ENCODE measurements at regions of chr10 and their contacts with region 1.

Region 1: DNA sequence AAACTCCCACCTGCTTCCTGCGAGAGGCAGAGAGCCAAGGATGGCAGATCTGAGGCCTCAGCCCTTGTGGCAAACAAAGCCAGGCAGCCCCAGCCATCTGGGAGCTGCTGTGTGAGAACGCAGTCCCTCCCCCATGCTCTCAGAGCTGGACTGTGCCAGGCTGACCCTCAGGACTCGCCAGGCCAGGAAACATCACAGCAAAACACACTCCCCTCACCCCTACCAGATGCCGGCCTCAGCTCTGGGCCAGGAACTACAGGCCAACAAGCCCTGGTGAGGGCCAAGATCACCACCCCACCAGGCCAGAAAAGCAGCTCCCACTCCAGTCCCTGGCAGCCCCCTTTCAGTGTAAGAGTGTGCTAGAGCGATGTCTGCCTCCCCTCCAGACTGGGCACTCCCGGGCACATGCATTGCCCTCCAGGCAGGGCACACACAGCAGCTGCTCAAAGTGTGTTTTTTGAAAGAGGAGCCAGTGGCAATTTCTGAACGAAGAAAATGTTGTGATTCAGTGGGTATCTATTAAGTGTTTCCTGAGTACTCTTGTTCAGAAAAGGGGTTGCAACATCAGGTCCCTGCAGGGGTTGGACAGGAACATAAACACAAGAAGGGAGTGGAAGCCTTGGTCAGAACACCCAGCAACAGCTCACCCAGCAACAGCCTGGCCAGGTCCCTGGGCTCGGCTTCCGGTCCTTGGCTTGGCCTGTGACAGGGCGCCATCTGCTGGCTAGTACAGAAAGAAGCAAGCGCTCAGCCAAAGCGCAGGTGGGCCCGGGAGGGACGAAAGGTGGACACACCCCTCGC is 18.3 kb downstream of the LRRC20 start:
- DNase-seq: peak; percentile 67
- ATAC-seq: peak; percentile 99
- H3K4me3 ChIP-seq: no peak overlapping the region
- H3K27ac ChIP-seq: no peak overlapping the region; the same call in 1 of the 2 replicates
- H3K4me1 ChIP-seq: peaks cover 2 to 10% of the 10 kb centered on the region in 2 experiments; a peak in 3 of 4 replicates
- H3K27me3 ChIP-seq: no peaks in the 10 kb centered on the region
- CTCF ChIP-seq: peak; percentile 85 to 94 (median 91)
- POLR2A ChIP-seq: no peak
- RAD21 ChIP-seq: peak; percentile 99

Region 2: DNA sequence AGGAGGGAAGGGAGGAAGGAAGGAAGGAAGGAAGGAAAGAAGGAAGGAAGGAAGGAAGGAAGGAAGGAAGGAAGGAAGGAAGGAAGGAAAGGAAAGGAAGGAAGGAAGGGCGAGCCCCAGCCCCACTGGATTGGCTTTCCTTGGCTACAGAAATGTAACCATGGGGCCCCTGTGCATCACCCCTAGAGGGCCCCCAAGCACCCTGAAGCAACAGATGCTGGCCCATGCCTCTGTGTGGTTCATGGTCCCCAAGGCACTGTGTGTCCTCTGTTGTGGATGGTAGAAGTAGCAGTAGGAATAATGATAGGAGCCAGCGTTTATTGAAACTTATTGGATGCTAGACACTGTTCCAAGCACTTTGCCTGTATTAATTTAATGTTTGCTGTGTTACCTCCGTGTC is 428.1 kb before region 1 on chr10:
- CTCF ChIA-PET with region 1: no interaction called
- POLR2A ChIA-PET with region 1: no interaction called
- RAD21 ChIA-PET with region 1: no interaction called
- intact Hi-C with region 1: no loop called
- DNase-seq: no peak
- ATAC-seq: peak; percentile 84
- H3K4me3 ChIP-seq: no peak overlapping the region
- H3K27ac ChIP-seq: no peak overlapping the region
- H3K4me1 ChIP-seq: no peaks in the 10 kb centered on the region
- H3K27me3 ChIP-seq: no peaks in the 10 kb centered on the region
- CTCF ChIP-seq: peak; percentile 21 to 42 (median 26); a peak in 3 of 6 replicates
- POLR2A ChIP-seq: no peak
- RAD21 ChIP-seq: peak; percentile 40; the same call in 1 of the 2 replicates

Region 3: DNA sequence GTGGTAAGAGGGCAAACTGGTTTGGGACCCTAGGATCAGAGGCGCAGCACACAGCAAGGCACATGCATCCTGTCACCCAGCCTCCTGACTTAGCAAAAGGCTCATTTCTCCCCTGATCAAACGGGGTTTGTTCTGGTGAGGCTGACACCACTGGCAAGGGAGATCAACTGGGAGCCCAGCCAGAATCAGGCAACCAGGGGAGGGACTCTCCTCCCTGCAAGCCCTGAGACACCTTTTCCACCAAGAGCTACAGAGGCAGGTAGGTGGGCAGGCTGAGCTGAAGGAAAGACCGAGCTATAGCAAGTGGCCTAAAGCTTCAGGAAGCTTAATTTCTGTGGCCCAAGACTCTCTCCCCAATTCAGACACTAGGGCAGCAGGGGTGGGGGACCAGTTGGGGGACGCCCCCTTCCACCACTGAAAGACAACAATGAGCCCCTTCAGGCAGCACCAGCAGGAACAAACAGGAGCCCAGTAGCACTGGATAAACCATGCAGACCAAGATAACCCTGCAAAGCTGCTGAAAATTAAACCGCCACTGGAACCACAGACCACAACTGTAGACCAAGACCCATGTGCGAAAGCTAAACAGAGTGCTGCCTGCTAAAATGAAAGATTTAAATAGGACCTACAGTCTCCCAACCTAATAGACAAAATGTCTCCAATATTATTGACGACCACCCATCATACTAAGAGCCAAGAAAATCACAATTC is 166.8 kb before region 1 on chr10:
- CTCF ChIA-PET with region 1: no interaction called
- POLR2A ChIA-PET with region 1: no interaction called
- RAD21 ChIA-PET with region 1: no interaction called
- intact Hi-C with region 1: no loop called
- DNase-seq: no peak
- ATAC-seq: 0 out of 2 replicates have a peak, but pooled peaks have one; percentile 26
- H3K4me3 ChIP-seq: no peak overlapping the region
- H3K27ac ChIP-seq: no peak overlapping the region
- H3K4me1 ChIP-seq: no peaks in the 10 kb centered on the region
- H3K27me3 ChIP-seq: no peaks in the 10 kb centered on the region
- CTCF ChIP-seq: no peak
- POLR2A ChIP-seq: no peak
- RAD21 ChIP-seq: no peak

Region 4: DNA sequence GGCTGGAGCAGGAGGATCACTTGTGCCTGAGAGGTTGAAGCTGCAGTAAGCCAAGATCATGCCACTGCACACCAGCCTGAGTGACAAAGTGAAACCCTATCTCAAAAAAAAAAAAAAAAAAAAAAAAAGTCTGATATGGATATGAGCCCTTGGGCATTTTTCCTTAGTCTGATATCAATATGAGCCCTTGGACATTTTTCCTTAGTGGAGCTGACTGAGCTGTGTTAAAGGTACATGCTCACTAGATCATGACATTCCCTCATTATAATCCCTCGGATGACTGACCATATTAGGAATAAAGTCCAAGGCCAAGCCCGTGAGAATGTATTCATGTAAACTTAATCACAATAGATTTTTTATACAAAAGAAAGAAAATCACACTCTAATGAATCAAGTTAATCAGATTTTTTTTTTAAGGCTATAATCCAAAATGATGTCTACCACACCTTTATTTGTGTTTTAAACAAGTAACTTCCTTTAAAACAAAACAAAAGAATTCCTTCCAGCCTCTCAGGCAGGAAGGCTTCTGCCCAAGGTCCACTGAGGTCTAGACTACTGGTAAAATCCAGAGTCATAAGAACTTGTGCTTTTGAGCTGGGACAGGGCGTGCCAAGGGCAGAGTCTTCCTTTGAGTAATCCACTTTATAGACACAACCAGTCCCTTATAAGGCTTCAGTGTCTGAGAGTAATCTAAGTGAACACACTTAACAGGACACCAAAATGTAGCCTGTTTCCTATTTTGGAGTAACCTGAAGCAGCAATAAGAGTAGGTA is 136.4 kb before region 1 on chr10:
- CTCF ChIA-PET with region 1: interaction called, 174 read pairs
- POLR2A ChIA-PET with region 1: interaction called, 3 read pairs
- RAD21 ChIA-PET with region 1: interaction called in 1 of 2 experiments, 30 read pairs
- intact Hi-C with region 1: no loop called
- DNase-seq: no peak
- ATAC-seq: no peak
- H3K4me3 ChIP-seq: no peak overlapping the region
- H3K27ac ChIP-seq: no peak overlapping the region
- H3K4me1 ChIP-seq: peaks cover 12 to 34% of the 10 kb centered on the region in 2 experiments; a peak in 3 of 4 replicates
- H3K27me3 ChIP-seq: no peaks in the 10 kb centered on the region
- CTCF ChIP-seq: no peak
- POLR2A ChIP-seq: no peak
- RAD21 ChIP-seq: no peak

Region 5: DNA sequence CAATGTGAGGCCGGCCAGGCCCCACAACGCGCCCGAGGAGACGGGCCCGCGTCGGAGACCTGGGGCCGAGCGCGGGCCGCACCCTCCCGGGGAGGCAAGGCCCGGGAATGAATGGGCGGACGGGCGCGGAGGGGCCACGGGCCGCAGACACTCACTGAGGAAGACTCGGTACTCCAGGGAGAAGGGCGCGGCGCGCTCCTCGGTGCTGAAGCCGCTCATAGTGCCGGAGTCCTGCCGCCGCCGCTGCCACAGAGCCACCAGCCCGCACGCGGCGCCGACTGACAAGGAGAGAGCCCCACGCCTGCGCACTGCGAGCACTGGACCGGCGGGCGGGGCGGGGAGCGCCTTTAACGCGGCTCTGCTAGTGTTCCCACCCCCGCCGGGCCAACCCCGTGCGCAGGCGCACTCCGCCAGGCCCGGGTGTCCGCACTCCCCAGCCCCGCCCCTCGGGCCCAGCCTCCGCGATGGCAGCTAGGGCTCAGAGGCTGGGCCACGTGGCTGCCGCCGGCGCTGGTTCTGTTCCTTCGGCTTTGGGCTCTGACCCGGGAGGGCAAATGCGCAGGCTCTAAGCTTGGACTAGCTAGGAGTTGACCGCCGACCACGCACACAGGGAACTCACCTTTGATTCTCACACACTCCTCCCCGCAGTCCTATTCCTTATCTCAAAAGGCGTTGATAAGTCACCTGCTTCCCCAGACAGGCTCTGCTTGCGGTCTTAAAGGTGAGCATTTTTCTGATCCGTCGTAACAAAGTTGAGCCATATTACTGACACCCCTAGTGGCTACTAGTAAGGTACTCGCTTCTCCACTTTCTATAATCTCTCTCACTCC is 130.8 kb before region 1 on chr10 and contains the start of gene PPA1:
- CTCF ChIA-PET with region 1: interaction called, 16 read pairs
- POLR2A ChIA-PET with region 1: no interaction called
- RAD21 ChIA-PET with region 1: no interaction called
- intact Hi-C with region 1: no loop called
- DNase-seq: peak; percentile 90
- ATAC-seq: peak; percentile 92
- H3K4me3 ChIP-seq: peak within 1 kb of the TSS; percentile 89 to 95
- H3K27ac ChIP-seq: peak within 1 kb of the TSS; percentile 80
- H3K4me1 ChIP-seq: peaks cover 0 to 19% of the 10 kb centered on the region in 2 experiments; a peak in 3 of 4 replicates
- H3K27me3 ChIP-seq: no peaks in the 10 kb centered on the region
- CTCF ChIP-seq: peak in 1 of 3 experiments; percentile 39; a peak in 3 of 6 replicates
- POLR2A ChIP-seq: peak; percentile 87
- RAD21 ChIP-seq: no peak
- total RNA-seq, gene PPA1: 234 TPM

Region 6: GRCh38 chr10:70267161-70267933 is 96.8 kb before region 1 on chr10:
- CTCF ChIA-PET with region 1: interaction called, 27 read pairs
- POLR2A ChIA-PET with region 1: interaction called, 4 read pairs
- RAD21 ChIA-PET with region 1: interaction called, 15 to 17 read pairs
- intact Hi-C with region 1: loop called (anchors 2 kb)
- DNase-seq: peak; percentile 73
- ATAC-seq: peak; percentile 80
- H3K4me3 ChIP-seq: no peak overlapping the region
- H3K27ac ChIP-seq: no peak overlapping the region
- H3K4me1 ChIP-seq: peaks cover 5 to 28% of the 10 kb centered on the region in 2 experiments; a peak in 3 of 4 replicates
- H3K27me3 ChIP-seq: no peaks in the 10 kb centered on the region
- CTCF ChIP-seq: peak in 2 of 3 experiments; percentile 44 to 60; a peak in 4 of 6 replicates
- POLR2A ChIP-seq: no peak
- RAD21 ChIP-seq: no peak; the same call in 1 of the 2 replicates

Region 7: DNA sequence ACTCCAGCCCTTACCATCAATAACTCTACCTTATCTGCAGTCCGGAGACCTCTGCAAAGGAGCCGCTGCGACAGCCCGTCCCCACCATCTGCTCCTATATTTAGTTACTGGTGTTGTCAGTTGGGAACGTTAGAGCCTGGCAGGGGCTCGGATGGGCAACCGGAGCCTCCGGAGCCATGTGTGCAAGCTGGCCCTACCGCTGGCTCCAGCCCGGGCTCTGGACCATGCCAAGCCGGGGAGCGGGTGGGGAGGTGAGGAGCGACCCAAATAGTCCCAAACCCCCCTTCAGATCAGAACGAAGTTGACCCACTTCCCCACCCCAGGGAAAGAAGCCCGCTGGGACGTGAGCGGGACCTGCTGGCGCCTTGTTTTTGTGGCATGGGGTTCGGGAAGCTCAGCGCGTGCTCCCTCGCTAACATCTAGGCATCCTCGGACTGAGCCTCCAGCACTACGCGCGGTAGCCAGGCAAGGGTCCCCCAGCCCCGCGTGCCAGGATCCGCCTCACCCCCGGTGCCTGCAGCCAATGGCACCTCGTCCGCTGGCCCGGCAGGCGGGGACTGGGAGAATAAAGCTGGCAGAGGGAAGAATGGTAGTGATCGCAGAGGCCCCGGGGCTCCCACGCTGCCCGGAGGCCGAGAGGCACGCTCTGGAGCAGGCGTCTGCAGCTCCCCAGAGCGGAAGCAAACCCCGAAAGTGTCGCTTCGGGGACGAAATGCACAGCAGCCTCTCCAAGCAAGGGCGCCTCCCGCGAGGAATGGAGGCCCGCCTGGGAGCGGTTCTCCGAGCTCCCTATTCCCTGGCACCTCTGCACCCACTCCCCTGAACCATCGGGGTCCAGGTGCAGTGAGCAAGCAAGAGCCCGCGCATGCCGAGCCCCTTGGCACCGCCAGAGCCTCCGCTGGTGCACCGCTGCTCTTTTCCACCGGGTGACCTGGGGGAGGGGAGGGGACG is 17.6 kb after region 1 on chr10:
- CTCF ChIA-PET with region 1: interaction called, 12 read pairs
- POLR2A ChIA-PET with region 1: no interaction called
- RAD21 ChIA-PET with region 1: interaction called in 1 of 2 experiments, 4 read pairs
- intact Hi-C with region 1: no loop called
- DNase-seq: no peak
- ATAC-seq: peak; percentile 37
- H3K4me3 ChIP-seq: peak overlapping the region; percentile 70
- H3K27ac ChIP-seq: peak overlapping the region; percentile 60
- H3K4me1 ChIP-seq: peaks cover 32 to 48% of the 10 kb centered on the region in 2 experiments
- H3K27me3 ChIP-seq: no peaks in the 10 kb centered on the region
- CTCF ChIP-seq: no peak
- POLR2A ChIP-seq: no peak
- RAD21 ChIP-seq: no peak

Region 8: GRCh38 chr10:70589762-70590654 is 225.8 kb after region 1 on chr10:
- CTCF ChIA-PET with region 1: no interaction called
- POLR2A ChIA-PET with region 1: no interaction called
- RAD21 ChIA-PET with region 1: no interaction called
- intact Hi-C with region 1: no loop called
- DNase-seq: no peak
- ATAC-seq: no peak
- H3K4me3 ChIP-seq: no peak overlapping the region
- H3K27ac ChIP-seq: no peak overlapping the region
- H3K4me1 ChIP-seq: peaks cover 32 to 84% of the 10 kb centered on the region in 2 experiments
- H3K27me3 ChIP-seq: no peaks in the 10 kb centered on the region
- CTCF ChIP-seq: no peak
- POLR2A ChIP-seq: no peak
- RAD21 ChIP-seq: no peak